PC-3 (cell line): ENCODE measurements at regions of chr1 and their contacts with region 1.

Region 1: GRCh38 chr1:94335950-94336349 is 82.2 kb upstream of the ABCD3 start:
- DNase-seq: peak; percentile 97
- ATAC-seq: peak; percentile 68
- H3K4me3 ChIP-seq: no peak overlapping the region
- H3K27ac ChIP-seq: no peak overlapping the region
- H3K4me1 ChIP-seq: peaks cover 37% of the 10 kb centered on the region
- H3K27me3 ChIP-seq: no peaks in the 10 kb centered on the region
- CTCF ChIP-seq: peak; percentile 99

Region 2: GRCh38 chr1:94039514-94039870 is 296.5 kb before region 1 on chr1:
- CTCF ChIA-PET with region 1: interaction called, 22 read pairs
- POLR2A ChIA-PET with region 1: no interaction called
- intact Hi-C with region 1: no loop called
- DNase-seq: peak; percentile 80
- ATAC-seq: peak; percentile 56
- H3K4me3 ChIP-seq: no peak overlapping the region
- H3K27ac ChIP-seq: no peak overlapping the region
- H3K4me1 ChIP-seq: peaks cover 32% of the 10 kb centered on the region
- H3K27me3 ChIP-seq: no peaks in the 10 kb centered on the region
- CTCF ChIP-seq: peak; percentile 98

Region 3: DNA sequence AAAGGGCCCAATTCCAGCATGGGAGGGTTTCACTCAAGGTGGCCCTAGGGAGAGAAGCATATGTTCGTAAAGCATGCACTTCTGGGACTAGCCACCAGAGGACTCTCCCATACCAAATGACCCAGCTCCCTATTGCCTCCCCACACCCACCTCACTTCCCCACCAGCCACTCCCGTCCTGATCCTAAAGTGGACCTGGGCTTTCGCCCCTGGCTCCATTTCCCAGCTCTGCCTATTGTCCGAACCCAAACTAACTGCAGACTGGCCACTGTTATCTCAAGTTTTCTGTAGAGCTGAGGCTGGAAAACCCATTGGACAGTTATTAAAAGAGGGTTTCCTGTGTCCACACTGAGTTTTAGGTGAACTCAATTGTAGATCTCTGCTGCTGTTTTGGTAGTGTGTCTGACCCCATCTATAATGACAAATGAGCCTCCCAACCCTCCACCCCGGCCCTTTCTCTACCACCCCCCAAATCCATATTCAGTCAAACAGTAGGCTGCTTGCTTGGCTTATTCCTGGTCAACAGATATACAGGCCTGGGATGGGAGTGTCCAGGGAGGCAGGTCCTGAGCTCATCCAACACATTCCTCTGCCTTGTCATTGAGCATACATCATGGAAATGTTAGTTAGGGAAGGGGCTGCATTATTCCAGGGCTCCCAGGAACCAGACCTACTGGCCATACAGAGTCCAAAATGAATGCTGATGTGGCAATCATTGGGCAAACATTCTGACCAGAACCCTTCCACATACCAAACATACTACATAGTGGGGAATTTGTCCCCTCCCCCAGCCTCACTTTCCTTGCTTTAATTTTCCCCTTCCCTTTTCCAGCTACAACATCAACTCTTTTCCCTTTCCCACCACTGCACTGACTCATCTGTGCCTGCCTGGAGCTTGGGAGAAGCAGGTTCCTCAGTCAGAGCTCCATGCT is 274.2 kb before region 1 on chr1:
- CTCF ChIA-PET with region 1: interaction called, 29 read pairs
- POLR2A ChIA-PET with region 1: no interaction called
- intact Hi-C with region 1: loop called (anchors 1 kb)
- DNase-seq: peak; percentile 77
- ATAC-seq: peak; percentile 89
- H3K4me3 ChIP-seq: no peak overlapping the region
- H3K27ac ChIP-seq: peak overlapping the region; percentile 42
- H3K4me1 ChIP-seq: peaks cover 37% of the 10 kb centered on the region
- H3K27me3 ChIP-seq: no peaks in the 10 kb centered on the region
- CTCF ChIP-seq: peak; percentile 92

Region 4: GRCh38 chr1:94305704-94306103 is 30.2 kb before region 1 on chr1:
- CTCF ChIA-PET with region 1: no interaction called
- POLR2A ChIA-PET with region 1: no interaction called
- intact Hi-C with region 1: no loop called
- DNase-seq: peak; percentile 76
- ATAC-seq: no peak
- H3K4me3 ChIP-seq: no peak overlapping the region
- H3K27ac ChIP-seq: peak overlapping the region; percentile 82
- H3K4me1 ChIP-seq: peaks cover 61% of the 10 kb centered on the region
- H3K27me3 ChIP-seq: no peaks in the 10 kb centered on the region
- CTCF ChIP-seq: no peak

Region 5: GRCh38 chr1:94463765-94464330 is 127.9 kb after region 1 on chr1:
- CTCF ChIA-PET with region 1: interaction called, 10 read pairs
- POLR2A ChIA-PET with region 1: no interaction called
- intact Hi-C with region 1: loop called (anchors 1 kb)
- DNase-seq: peak; percentile 78
- ATAC-seq: peak; percentile 99
- H3K4me3 ChIP-seq: no peak overlapping the region
- H3K27ac ChIP-seq: no peak overlapping the region
- H3K4me1 ChIP-seq: no peaks in the 10 kb centered on the region
- H3K27me3 ChIP-seq: no peaks in the 10 kb centered on the region
- CTCF ChIP-seq: peak; percentile 87